ENCODE measurements at regions of chr6 and their contacts with region 1.

Region 1: DNA sequence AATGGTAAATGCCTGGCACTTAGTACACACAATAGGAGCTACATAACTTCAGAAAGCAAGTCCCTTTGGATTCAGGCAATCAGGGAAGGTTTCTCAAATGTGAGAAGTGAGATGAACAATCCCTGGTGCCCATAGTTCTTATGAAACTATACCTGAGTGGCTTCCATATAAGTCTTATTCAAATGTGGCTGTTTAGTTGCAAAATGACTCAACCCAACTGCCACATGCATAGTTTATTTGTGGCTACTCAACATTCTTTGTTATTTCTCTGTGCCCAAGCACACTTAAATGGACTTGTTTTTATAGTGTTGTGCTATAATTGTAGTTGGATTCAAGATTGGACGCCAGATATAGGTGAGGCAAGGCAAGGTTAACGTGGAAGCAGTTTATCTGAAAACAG is 93.7 kb upstream of the ATXN1 start:
- H3K4me3 Mint-ChIP-seq: no peak overlapping the region
- H3K27ac Mint-ChIP-seq: no peak overlapping the region
- H3K4me1 Mint-ChIP-seq: peaks cover 67% of the 10 kb centered on the region
- H3K27me3 Mint-ChIP-seq: no peaks in the 10 kb centered on the region

Region 2: DNA sequence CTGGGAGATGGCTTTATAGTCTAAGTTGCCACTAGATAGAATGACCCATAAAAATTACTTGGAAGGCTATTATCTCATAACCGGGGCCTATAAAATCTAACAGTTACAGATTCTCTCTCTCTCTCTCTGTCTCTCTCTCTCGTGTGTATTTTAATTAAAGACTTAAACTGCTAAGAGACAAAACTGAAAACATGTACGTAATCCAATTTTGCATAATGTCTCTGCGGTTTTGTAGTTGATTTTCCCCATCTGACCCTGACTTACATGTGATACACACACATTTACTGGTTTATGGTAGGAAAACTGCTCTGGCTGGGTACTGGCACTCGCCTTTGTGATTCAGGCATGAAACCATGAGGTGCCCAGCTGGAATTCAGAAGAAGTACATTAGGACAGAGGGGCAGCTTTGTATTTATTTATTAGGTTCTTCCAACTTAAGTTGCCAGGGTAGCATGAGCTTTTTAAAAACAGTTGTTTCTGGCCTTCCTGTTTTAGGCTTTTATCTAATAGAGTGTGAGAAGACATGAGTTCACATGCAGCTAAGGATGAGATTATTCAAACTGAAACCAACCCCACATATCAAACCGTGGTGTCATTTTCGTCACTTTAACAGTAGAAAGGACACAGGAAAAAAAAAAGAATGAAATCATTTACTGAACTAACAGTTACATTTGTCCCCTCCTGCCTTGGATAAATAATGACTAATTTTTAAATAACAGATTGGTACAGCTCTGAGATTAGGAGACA is 434.1 kb before region 1 on chr6:
- intact Hi-C with region 1: no loop called
- H3K4me3 Mint-ChIP-seq: no peak overlapping the region
- H3K27ac Mint-ChIP-seq: peak overlapping the region; percentile 84
- H3K4me1 Mint-ChIP-seq: peaks cover 24% of the 10 kb centered on the region
- H3K27me3 Mint-ChIP-seq: no peaks in the 10 kb centered on the region

Region 3: DNA sequence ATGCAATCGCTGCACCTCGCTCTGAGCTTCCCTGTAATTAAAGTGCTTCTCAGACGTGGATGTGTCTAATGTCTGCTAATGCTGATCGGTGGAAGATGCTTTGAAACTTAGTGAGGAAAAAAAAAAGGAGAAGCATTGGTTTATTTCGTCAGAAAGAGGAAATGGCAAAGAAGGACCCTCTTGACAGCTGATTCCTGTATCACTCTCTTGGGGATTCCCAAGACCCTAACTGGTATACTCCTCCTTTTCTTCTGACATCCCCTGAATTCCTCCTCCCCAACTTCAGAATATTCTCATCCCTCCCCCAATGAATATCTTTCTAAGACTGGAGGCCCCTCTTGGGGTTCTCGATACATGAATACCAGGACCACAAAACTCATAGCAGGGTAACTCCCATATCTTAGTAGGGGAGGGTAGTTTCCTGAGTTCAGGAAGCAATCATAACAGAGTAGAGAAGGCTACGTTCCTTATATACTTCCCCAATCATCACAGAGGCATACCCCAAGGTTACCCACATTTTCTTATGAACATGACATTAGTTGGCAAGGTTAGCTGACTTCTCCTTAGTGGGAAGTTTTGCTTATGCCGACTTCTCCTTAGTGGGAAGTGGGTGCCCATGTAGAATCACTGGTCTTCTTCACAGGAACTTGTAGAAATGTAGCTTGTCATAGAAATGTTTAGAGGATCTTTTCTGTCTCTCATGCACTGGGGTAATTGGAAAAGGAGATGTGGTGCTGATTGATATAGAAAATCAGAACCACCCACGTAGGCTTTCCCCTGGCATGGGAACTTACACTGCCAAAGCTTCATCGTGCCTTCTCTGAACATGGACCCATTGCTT is 29.9 kb before region 1 on chr6:
- intact Hi-C with region 1: loop called (anchors 1 kb)
- H3K4me3 Mint-ChIP-seq: peak overlapping the region; percentile 32
- H3K27ac Mint-ChIP-seq: peak overlapping the region; percentile 99
- H3K4me1 Mint-ChIP-seq: peaks cover 58% of the 10 kb centered on the region
- H3K27me3 Mint-ChIP-seq: peaks cover 3% of the 10 kb centered on the region

Region 4: DNA sequence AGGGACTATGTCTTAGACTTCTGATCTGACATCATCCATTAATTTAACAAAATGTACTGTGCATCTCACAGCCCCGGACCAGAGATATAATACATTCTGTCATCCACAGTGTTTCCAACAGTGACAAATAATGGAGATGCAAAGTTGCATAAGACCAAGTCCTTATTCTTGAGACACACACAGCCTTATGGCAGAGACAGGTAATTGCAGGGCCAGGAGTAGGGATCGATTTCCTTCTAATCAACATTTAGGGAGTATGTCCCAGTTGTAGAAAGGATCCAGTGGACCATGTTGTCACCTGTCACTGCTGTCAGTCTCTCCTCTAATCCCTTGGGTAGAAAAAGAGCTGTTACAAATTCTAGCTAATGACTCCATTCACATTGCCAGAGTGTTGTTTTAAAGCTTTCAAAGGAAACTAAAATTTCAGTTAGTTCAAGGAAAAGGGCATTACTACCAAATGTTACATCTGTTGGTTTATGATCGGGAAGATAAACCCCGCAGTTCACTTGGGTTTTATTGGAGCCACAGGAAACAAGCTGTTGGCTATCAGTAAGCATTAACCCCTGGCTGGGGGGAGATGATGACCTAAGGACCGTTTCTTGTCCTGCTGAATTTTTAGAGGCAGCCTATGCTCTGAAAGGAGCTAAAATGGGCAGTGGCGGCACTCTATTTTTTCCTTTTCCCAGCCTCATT is 17.7 kb after region 1 on chr6:
- intact Hi-C with region 1: no loop called
- H3K4me3 Mint-ChIP-seq: no peak overlapping the region
- H3K27ac Mint-ChIP-seq: no peak overlapping the region
- H3K4me1 Mint-ChIP-seq: peaks cover 6% of the 10 kb centered on the region
- H3K27me3 Mint-ChIP-seq: peaks cover 24% of the 10 kb centered on the region

Region 5: GRCh38 chr6:16901782-16902181 is 46.8 kb after region 1 on chr6:
- intact Hi-C with region 1: loop called (anchors 10 kb)
- H3K4me3 Mint-ChIP-seq: no peak overlapping the region
- H3K27ac Mint-ChIP-seq: no peak overlapping the region
- H3K4me1 Mint-ChIP-seq: peaks cover 46% of the 10 kb centered on the region
- H3K27me3 Mint-ChIP-seq: peaks cover 2% of the 10 kb centered on the region

Region 6: GRCh38 chr6:16999491-17000436 is 144.8 kb after region 1 on chr6:
- intact Hi-C with region 1: no loop called
- H3K4me3 Mint-ChIP-seq: no peak overlapping the region
- H3K27ac Mint-ChIP-seq: no peak overlapping the region
- H3K4me1 Mint-ChIP-seq: no peaks in the 10 kb centered on the region
- H3K27me3 Mint-ChIP-seq: peaks cover 28% of the 10 kb centered on the region